ENCODE measurements at regions of chr2 and their contacts with region 1.

Region 1: DNA sequence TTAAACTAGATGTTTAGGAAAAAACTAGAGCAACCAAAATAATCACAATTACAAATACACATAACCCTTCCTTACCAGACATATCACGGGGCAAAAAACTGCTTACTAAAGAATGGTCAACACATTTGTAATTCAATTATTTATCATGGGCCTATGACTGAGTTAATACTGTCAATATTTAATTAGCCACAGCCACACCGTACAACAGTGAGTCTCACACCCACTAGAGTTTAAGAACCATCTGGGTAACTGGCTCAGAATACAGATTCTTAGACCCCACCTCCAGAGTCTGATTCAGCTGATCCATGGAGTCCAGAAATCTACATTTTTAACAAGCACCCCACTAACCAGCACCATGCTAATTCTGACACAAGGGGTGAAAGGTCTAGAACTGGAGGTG is 14.8 kb downstream of the ATL2 start:
- DNase-seq: no peak
- ATAC-seq: no peak
- H3K4me3 ChIP-seq: no peak overlapping the region
- H3K27ac ChIP-seq: no peak overlapping the region
- H3K4me1 ChIP-seq: peaks cover 28% of the 10 kb centered on the region
- H3K27me3 ChIP-seq: no peaks in the 10 kb centered on the region
- CTCF ChIP-seq: no peak

Region 2: GRCh38 chr2:38148501-38148900 is 213.7 kb before region 1 on chr2:
- intact Hi-C with region 1: no loop called
- DNase-seq: no peak
- ATAC-seq: peak in 3 of 4 donors; percentile 28 to 65 (median 35)
- H3K4me3 ChIP-seq: no peak overlapping the region
- H3K27ac ChIP-seq: no peak overlapping the region
- H3K4me1 ChIP-seq: no peaks in the 10 kb centered on the region
- H3K27me3 ChIP-seq: no peaks in the 10 kb centered on the region
- CTCF ChIP-seq: no peak

Region 3: DNA sequence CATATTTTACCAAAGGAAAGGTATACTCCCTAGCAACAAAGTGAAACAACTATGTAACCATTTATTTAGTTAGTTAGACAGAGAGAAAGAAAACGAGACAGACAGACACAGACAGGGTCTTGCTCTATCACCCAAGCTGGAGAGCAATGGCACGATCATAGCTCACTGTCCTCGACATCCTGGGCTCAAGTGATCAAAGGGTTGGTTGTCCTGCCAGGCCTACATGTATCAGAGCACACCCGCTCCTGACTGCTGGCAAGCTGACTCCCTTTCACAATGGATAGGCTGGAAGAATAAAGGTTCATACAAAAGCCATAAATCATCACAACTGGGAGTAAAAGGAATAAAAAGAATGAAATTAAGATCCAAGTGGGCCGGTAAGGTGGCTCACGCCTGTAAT is 38.6 kb before region 1 on chr2:
- intact Hi-C with region 1: loop called in 1 of 2 experiments (anchors 5 kb)
- DNase-seq: no peak
- ATAC-seq: peak in 1 of 4 donors; percentile 41
- H3K4me3 ChIP-seq: no peak overlapping the region
- H3K27ac ChIP-seq: no peak overlapping the region
- H3K4me1 ChIP-seq: peaks cover 18% of the 10 kb centered on the region
- H3K27me3 ChIP-seq: no peaks in the 10 kb centered on the region
- CTCF ChIP-seq: no peak

Region 4: GRCh38 chr2:38485734-38486133 is 123.5 kb after region 1 on chr2:
- intact Hi-C with region 1: no loop called
- DNase-seq: no peak
- ATAC-seq: peak; percentile 59 to 83 (median 73)
- H3K4me3 ChIP-seq: no peak overlapping the region
- H3K27ac ChIP-seq: peak overlapping the region; percentile 62
- H3K4me1 ChIP-seq: peaks cover 40% of the 10 kb centered on the region
- H3K27me3 ChIP-seq: no peaks in the 10 kb centered on the region
- CTCF ChIP-seq: peak; percentile 7